Activated naive CD4-positive, alpha-beta T cell treated with anti-CD3 and anti-CD28 coated beads for 36 hours (primary cell): ENCODE measurements at regions of chr1 and their contacts with region 1.

Region 1: GRCh38 chr1:186482661-186483255 is 21.8 kb upstream of the PDC start:
- DNase-seq: peak; percentile 71
- H3K4me3 Mint-ChIP-seq: no peak overlapping the region
- H3K27ac Mint-ChIP-seq: no peak overlapping the region
- H3K4me1 Mint-ChIP-seq: no peaks in the 10 kb centered on the region
- H3K27me3 Mint-ChIP-seq: no peaks in the 10 kb centered on the region

Region 2: GRCh38 chr1:186605762-186606350 is 123.1 kb after region 1 on chr1:
- CTCF ChIA-PET with region 1: no interaction called
- intact Hi-C with region 1: loop called (anchors 5 kb)
- DNase-seq: peak; percentile 56
- H3K4me3 Mint-ChIP-seq: no peak overlapping the region
- H3K27ac Mint-ChIP-seq: no peak overlapping the region
- H3K4me1 Mint-ChIP-seq: no peaks in the 10 kb centered on the region
- H3K27me3 Mint-ChIP-seq: peaks cover 35% of the 10 kb centered on the region

Region 3: DNA sequence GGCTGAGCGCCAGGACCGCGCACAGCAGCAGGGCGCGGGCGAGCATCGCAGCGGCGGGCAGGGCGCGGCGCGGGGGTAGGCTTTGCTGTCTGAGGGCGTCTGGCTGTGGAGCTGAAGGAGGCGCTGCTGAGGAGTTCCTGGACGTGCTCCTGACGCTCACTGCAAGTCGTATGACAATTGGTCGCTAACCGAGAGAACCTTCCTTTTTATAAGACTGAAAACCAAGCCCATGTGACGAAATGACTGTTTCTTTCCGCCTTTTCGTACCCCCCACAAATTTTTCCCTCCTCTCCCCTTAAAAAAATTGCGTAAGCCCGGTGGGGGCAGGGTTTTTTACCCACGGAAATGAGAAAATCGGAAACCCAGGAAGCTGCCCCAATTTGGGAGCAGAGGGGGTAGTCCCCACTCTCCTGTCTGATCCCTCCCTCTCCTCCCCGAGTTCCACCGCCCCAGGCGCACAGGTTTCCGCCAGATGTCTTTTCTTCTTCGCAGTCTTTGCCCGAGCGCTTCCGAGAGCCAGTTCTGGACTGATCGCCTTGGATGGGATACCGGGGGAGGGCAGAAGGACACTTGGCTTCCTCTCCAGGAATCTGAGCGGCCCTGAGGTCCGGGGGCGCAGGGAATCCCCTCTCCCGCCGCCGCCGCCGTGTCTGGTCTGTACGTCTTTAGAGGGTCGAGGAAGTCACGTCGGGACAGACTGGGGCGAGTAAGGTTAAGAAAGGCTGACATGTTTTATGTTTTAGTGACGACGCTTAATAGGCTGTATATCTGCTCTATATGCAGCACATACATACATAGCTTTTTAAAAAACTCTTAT is 197.7 kb after region 1 on chr1 and contains the start of gene PTGS2:
- CTCF ChIA-PET with region 1: interaction called, 6 read pairs
- intact Hi-C with region 1: loop called (anchors 1 kb)
- DNase-seq: peak; percentile 65
- H3K4me3 Mint-ChIP-seq: peak within 1 kb of the TSS; percentile 78
- H3K27ac Mint-ChIP-seq: no peak within 1 kb of the TSS
- H3K4me1 Mint-ChIP-seq: peaks cover 10% of the 10 kb centered on the region
- H3K27me3 Mint-ChIP-seq: peaks cover 52% of the 10 kb centered on the region
- total RNA-seq, gene PTGS2: 1.8 to 2.0 TPM

Region 4: GRCh38 chr1:186722711-186723309 is 240.1 kb after region 1 on chr1:
- CTCF ChIA-PET with region 1: no interaction called
- intact Hi-C with region 1: loop called (anchors 1 kb)
- DNase-seq: peak; percentile 25
- H3K4me3 Mint-ChIP-seq: no peak overlapping the region
- H3K27ac Mint-ChIP-seq: no peak overlapping the region
- H3K4me1 Mint-ChIP-seq: no peaks in the 10 kb centered on the region
- H3K27me3 Mint-ChIP-seq: no peaks in the 10 kb centered on the region

Region 5: GRCh38 chr1:186806477-186806876 is 323.7 kb after region 1 on chr1:
- CTCF ChIA-PET with region 1: no interaction called
- intact Hi-C with region 1: loop called (anchors 1 kb)
- DNase-seq: peak; percentile 19
- H3K4me3 Mint-ChIP-seq: no peak overlapping the region
- H3K27ac Mint-ChIP-seq: no peak overlapping the region
- H3K4me1 Mint-ChIP-seq: no peaks in the 10 kb centered on the region
- H3K27me3 Mint-ChIP-seq: no peaks in the 10 kb centered on the region

Region 6: DNA sequence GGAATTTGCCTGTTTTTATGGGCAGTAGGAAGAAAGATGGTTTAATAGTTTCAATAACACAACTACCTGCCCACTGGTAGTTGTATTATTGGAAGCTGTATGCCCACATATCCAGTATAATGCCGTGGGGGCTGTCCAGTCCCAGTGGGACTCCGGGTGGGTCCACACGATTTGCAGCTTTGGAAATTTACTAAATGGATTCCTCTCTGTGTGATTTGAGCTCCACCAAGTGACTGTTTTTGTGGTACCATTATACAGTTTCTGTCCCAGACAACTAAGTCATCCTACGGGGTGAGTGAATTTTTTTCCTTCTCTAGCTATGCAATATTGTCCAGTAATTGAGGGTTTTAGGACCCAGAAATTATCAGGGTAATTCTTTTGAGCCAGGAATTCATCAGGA is 432.8 kb after region 1 on chr1:
- CTCF ChIA-PET with region 1: no interaction called
- intact Hi-C with region 1: loop called (anchors 10 kb)
- DNase-seq: no peak
- H3K4me3 Mint-ChIP-seq: no peak overlapping the region
- H3K27ac Mint-ChIP-seq: no peak overlapping the region
- H3K4me1 Mint-ChIP-seq: no peaks in the 10 kb centered on the region
- H3K27me3 Mint-ChIP-seq: no peaks in the 10 kb centered on the region